AG04450 (cell line): ENCODE measurements at regions of chr20 and their contacts with region 1.

Region 1: DNA sequence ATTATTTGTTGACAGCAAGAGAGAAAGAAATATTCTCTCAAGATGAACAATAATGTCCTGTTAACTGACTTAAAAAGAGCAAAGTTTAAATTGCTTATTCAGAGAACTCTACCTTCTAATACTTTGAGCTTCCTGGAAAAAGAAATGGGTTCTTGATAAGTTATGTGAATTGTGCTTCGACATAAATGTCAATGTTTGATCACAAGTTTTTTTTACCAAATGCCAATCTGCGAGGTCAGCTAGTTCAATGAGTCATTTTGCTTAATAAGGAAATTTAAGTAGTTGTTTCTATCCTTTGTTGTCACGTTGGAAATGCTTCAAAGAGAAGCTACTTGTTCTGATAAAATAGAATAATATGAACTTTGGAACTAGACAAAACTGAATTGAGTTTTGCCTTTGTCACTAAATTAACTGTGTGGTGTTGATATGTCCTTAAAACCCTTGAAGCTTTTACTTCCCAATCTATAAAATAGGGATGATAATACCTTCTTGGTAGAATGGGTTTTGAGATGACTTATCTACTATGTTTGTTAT is 642.1 kb upstream of the FLRT3 start:
- DNase-seq: no peak
- H3K4me3 ChIP-seq: no peak overlapping the region
- H3K27ac ChIP-seq: no peak overlapping the region
- H3K27me3 ChIP-seq: no peaks in the 10 kb centered on the region
- CTCF ChIP-seq: no peak

Region 2: GRCh38 chr20:15332711-15333160 is 353.2 kb after region 1 on chr20:
- CTCF ChIA-PET with region 1: interaction called, 10 read pairs
- POLR2A ChIA-PET with region 1: no interaction called
- DNase-seq: no peak
- H3K4me3 ChIP-seq: no peak overlapping the region
- H3K27ac ChIP-seq: no peak overlapping the region
- H3K27me3 ChIP-seq: no peaks in the 10 kb centered on the region
- CTCF ChIP-seq: no peak